Naive thymus-derived CD4-positive, alpha-beta T cell (primary cell): ENCODE measurements at regions of chr6 and their contacts with region 1.

Region 1: DNA sequence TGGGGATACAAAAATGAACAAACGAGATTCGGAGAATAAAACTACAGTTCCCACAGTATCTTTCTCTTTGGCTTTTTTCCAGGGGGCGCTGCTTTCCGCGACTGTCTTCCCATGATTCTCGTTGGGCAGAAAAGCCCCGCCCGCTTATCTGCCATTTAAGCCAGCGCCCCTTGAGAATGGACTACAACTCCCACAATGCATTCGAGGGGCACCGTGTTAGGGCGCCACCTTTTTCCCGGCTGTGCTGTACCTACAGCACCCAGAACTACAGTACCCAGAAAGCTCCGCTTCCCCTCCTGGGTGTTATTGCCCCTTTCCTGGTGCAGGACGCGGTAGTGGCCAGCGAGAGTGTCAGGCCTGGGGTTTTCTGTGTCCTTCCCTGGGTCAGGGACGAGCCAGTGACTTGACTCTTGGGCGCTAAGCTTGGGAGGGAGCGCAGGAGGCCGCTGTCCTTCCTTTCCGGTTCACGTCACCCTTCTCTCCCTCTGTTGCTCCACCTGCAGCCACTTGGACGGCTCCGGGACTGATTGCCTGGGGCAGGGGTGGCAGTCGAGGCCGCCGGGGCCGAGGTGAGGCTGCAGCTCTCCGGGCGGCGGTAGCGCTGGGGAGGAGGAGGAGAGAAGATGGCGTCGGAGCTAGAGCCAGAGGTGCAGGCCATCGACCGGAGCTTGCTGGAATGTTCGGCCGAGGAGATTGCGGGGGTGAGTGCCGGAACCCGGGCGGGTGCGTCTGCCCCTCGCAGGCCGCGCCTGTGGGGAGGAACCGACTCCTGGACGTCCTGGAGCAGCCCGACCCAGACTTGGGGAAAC is at the start of gene UBR2:
- DNase-seq: peak; percentile 67 to 97 (median 93)
- ATAC-seq: peak; percentile 99
- H3K4me3 ChIP-seq: peak within 1 kb of the TSS; percentile 92
- H3K4me3 Mint-ChIP-seq: peak within 1 kb of the TSS; percentile 94 to 100 (median 96)
- H3K27ac ChIP-seq: peak within 1 kb of the TSS; percentile 95
- H3K27ac Mint-ChIP-seq: peak within 1 kb of the TSS; percentile 89 to 98 (median 93)
- H3K4me1 ChIP-seq: peaks cover 7 to 12% of the 10 kb centered on the region in 2 donors
- H3K4me1 Mint-ChIP-seq: peaks cover 17 to 43% (median 29%) of the 10 kb centered on the region in 7 donors
- H3K27me3 ChIP-seq: no peaks in the 10 kb centered on the region
- H3K27me3 Mint-ChIP-seq: peaks cover 0 to 7% (median 0%) of the 10 kb centered on the region in 5 donors
- total RNA-seq, gene UBR2: 35.6 to 45.5 (median 38.9) TPM

Region 2: DNA sequence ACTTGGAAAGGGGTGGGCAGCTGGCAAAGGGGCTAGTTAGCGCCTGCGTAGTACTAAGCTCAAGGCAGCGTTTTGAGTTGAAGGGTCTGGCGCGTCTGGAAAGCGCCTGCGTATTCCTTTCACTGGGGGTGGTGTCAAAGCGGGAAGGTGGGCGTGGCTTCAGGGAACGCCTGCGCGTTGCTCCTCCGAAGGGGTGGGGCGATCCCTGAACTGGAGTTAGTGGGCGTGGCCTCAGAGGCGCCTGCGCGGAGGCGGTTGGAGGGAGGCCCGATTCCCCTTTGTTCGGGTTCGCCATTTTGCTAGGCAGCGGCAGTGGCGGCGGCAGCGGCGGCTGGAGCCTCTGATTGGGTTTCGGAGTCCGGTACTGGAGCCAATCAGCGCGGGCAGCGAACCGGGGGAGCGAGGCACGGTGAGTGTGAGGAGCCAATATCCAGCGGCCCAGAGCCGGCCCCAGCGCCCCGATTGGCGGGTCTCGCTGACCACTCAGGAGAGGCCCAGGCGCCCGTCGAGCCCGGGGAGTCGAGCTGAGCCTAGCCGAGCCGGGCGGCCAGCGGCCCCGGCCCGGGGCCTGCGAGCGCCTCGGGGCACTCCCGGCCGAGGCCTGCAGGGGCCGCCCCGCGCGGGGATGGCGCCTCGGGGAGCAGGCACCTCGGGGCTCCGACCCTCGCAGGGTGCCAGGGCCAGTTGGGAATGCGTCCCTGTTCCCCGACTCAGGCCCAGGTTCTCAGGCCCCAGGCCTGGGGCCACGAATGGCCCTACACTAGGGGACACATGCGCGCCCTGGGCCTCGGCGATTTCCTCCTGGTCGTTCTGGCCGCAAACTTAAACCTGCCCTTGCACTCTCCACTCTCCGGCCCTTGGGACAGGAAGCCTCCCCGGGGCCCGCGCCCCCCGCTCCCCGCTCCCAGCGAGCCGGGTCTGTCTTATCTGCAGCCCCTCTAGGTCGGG is 1491.0 kb before region 1 on chr6 and contains the start of gene NFYA:
- CTCF ChIA-PET with region 1: no interaction called
- POLR2A ChIA-PET with region 1: no interaction called
- intact Hi-C with region 1: loop called in 1 of 2 experiments (anchors 5 kb)
- DNase-seq: peak; percentile 99 to 100 (median 100)
- ATAC-seq: peak; percentile 80
- H3K4me3 ChIP-seq: peak within 1 kb of the TSS; percentile 78
- H3K4me3 Mint-ChIP-seq: peak within 1 kb of the TSS; percentile 90 to 98 (median 96)
- H3K27ac ChIP-seq: peak within 1 kb of the TSS; percentile 95
- H3K27ac Mint-ChIP-seq: peak within 1 kb of the TSS; percentile 95 to 99 (median 97)
- H3K4me1 ChIP-seq: peaks cover 30% of the 10 kb centered on the region in 2 donors
- H3K4me1 Mint-ChIP-seq: peaks cover 39 to 66% (median 59%) of the 10 kb centered on the region in 7 donors
- H3K27me3 ChIP-seq: no peaks in the 10 kb centered on the region
- H3K27me3 Mint-ChIP-seq: peaks cover 0 to 5% (median 0%) of the 10 kb centered on the region in 5 donors
- total RNA-seq, gene NFYA: 31.6 to 63.3 (median 35.9) TPM

Region 3: GRCh38 chr6:41920921-41921711 is 642.8 kb before region 1 on chr6 and contains the starts of genes BYSL and MED20:
- CTCF ChIA-PET with region 1: no interaction called
- POLR2A ChIA-PET with region 1: interaction called, 3 read pairs
- intact Hi-C with region 1: loop called in 1 of 2 experiments (anchors 1 kb)
- DNase-seq: peak; percentile 93 to 99 (median 96)
- ATAC-seq: peak; percentile 96
- H3K4me3 ChIP-seq: peak within 1 kb of the TSS; percentile 76
- H3K4me3 Mint-ChIP-seq: peak within 1 kb of the TSS; percentile 95 to 100 (median 99)
- H3K27ac ChIP-seq: peak within 1 kb of the TSS; percentile 95
- H3K27ac Mint-ChIP-seq: peak within 1 kb of the TSS; percentile 94 to 100 (median 99)
- H3K4me1 ChIP-seq: peaks cover 20 to 24% of the 10 kb centered on the region in 2 donors
- H3K4me1 Mint-ChIP-seq: peaks cover 27 to 58% (median 50%) of the 10 kb centered on the region in 7 donors
- H3K27me3 ChIP-seq: no peaks in the 10 kb centered on the region
- H3K27me3 Mint-ChIP-seq: peaks cover 0 to 3% (median 0%) of the 10 kb centered on the region in 5 donors
- total RNA-seq, gene BYSL: 3.9 to 35.7 (median 8.1) TPM
- total RNA-seq, gene MED20: 4.5 to 21.7 (median 9.4) TPM

Region 4: GRCh38 chr6:42390228-42390934 is 173.5 kb before region 1 on chr6:
- CTCF ChIA-PET with region 1: no interaction called
- POLR2A ChIA-PET with region 1: interaction called, 10 read pairs
- intact Hi-C with region 1: no loop called
- DNase-seq: peak in 8 of 9 donors; percentile 69 to 90 (median 82)
- ATAC-seq: peak; percentile 88
- H3K4me3 ChIP-seq: peak overlapping the region; percentile 50
- H3K4me3 Mint-ChIP-seq: peak overlapping the region; percentile 71 to 87 (median 84)
- H3K27ac ChIP-seq: peak overlapping the region; percentile 85
- H3K27ac Mint-ChIP-seq: peak overlapping the region; percentile 97 to 100 (median 99)
- H3K4me1 ChIP-seq: peaks cover 89% of the 10 kb centered on the region in 2 donors
- H3K4me1 Mint-ChIP-seq: peaks cover 75 to 100% (median 96%) of the 10 kb centered on the region in 7 donors
- H3K27me3 ChIP-seq: no peaks in the 10 kb centered on the region
- H3K27me3 Mint-ChIP-seq: no peaks in the 10 kb centered on the region

Region 5: DNA sequence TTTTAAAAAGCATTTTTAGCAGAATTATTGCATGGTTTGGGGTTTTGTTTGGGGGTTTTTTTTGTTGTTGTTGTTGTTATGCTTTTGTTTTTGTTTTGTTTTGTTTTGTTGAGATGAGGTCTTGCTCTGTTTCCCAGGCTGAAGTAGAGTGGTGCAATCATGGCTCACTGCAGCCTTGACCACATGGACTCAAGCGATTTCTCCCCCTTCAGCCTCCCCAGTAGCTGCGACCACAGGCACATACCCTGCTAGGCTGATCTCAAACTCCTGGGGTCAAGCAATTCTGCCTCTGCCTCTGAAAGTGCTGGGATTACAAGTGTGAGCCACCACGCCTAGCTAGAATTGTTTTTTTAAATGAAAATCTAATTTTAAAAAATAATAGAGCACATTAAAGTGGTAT is 35.7 kb after region 1 on chr6:
- CTCF ChIA-PET with region 1: no interaction called
- POLR2A ChIA-PET with region 1: no interaction called
- intact Hi-C with region 1: no loop called
- DNase-seq: no peak
- ATAC-seq: no peak
- H3K4me3 ChIP-seq: no peak overlapping the region
- H3K4me3 Mint-ChIP-seq: no peak overlapping the region
- H3K27ac ChIP-seq: no peak overlapping the region
- H3K27ac Mint-ChIP-seq: peak overlapping the region in 1 of 9 donors; percentile 59
- H3K4me1 ChIP-seq: no peaks in the 10 kb centered on the region
- H3K4me1 Mint-ChIP-seq: peaks cover 6 to 20% (median 11%) of the 10 kb centered on the region in 7 donors
- H3K27me3 ChIP-seq: no peaks in the 10 kb centered on the region
- H3K27me3 Mint-ChIP-seq: no peaks in the 10 kb centered on the region

Region 6: GRCh38 chr6:42714098-42714761 is 150.3 kb after region 1 on chr6:
- CTCF ChIA-PET with region 1: no interaction called
- POLR2A ChIA-PET with region 1: no interaction called
- intact Hi-C with region 1: no loop called
- DNase-seq: no peak
- ATAC-seq: no peak
- H3K4me3 ChIP-seq: no peak overlapping the region
- H3K4me3 Mint-ChIP-seq: no peak overlapping the region
- H3K27ac ChIP-seq: no peak overlapping the region
- H3K27ac Mint-ChIP-seq: no peak overlapping the region
- H3K4me1 ChIP-seq: no peaks in the 10 kb centered on the region
- H3K4me1 Mint-ChIP-seq: no peaks in the 10 kb centered on the region
- H3K27me3 ChIP-seq: no peaks in the 10 kb centered on the region
- H3K27me3 Mint-ChIP-seq: no peaks in the 10 kb centered on the region

Region 7: GRCh38 chr6:42879372-42880239 is 315.7 kb after region 1 on chr6 and contains the start of gene RPL7L1:
- CTCF ChIA-PET with region 1: no interaction called
- POLR2A ChIA-PET with region 1: interaction called, 9 read pairs
- intact Hi-C with region 1: loop called (anchors 1 kb)
- DNase-seq: peak; percentile 70 to 93 (median 88)
- ATAC-seq: peak; percentile 95
- H3K4me3 ChIP-seq: peak within 1 kb of the TSS; percentile 82
- H3K4me3 Mint-ChIP-seq: peak within 1 kb of the TSS; percentile 93 to 99 (median 96)
- H3K27ac ChIP-seq: peak within 1 kb of the TSS; percentile 89
- H3K27ac Mint-ChIP-seq: peak within 1 kb of the TSS; percentile 98 to 100 (median 99)
- H3K4me1 ChIP-seq: peaks cover 5 to 7% of the 10 kb centered on the region in 2 donors
- H3K4me1 Mint-ChIP-seq: peaks cover 7 to 40% (median 29%) of the 10 kb centered on the region in 7 donors
- H3K27me3 ChIP-seq: no peaks in the 10 kb centered on the region
- H3K27me3 Mint-ChIP-seq: no peaks in the 10 kb centered on the region
- total RNA-seq, gene RPL7L1: 65.6 to 91.7 (median 78.1) TPM

Region 8: GRCh38 chr6:43059168-43060033 is 495.5 kb after region 1 on chr6 and contains the starts of genes KLC4 and MRPL2:
- CTCF ChIA-PET with region 1: no interaction called
- POLR2A ChIA-PET with region 1: interaction called, 5 read pairs
- intact Hi-C with region 1: loop called (anchors 1 kb)
- DNase-seq: peak; percentile 79 to 98 (median 95)
- ATAC-seq: peak; percentile 99
- H3K4me3 ChIP-seq: peak within 1 kb of the TSS; percentile 80
- H3K4me3 Mint-ChIP-seq: peak within 1 kb of the TSS; percentile 88 to 100 (median 96)
- H3K27ac ChIP-seq: peak within 1 kb of the TSS; percentile 88
- H3K27ac Mint-ChIP-seq: peak within 1 kb of the TSS; percentile 95 to 100 (median 99)
- H3K4me1 ChIP-seq: peaks cover 0 to 21% of the 10 kb centered on the region in 2 donors
- H3K4me1 Mint-ChIP-seq: peaks cover 28 to 50% (median 45%) of the 10 kb centered on the region in 7 donors
- H3K27me3 ChIP-seq: no peaks in the 10 kb centered on the region
- H3K27me3 Mint-ChIP-seq: no peaks in the 10 kb centered on the region
- total RNA-seq, gene KLC4: 16.5 to 56.9 (median 42.5) TPM
- total RNA-seq, gene MRPL2: 32.0 to 57.5 (median 47.7) TPM

Region 9: DNA sequence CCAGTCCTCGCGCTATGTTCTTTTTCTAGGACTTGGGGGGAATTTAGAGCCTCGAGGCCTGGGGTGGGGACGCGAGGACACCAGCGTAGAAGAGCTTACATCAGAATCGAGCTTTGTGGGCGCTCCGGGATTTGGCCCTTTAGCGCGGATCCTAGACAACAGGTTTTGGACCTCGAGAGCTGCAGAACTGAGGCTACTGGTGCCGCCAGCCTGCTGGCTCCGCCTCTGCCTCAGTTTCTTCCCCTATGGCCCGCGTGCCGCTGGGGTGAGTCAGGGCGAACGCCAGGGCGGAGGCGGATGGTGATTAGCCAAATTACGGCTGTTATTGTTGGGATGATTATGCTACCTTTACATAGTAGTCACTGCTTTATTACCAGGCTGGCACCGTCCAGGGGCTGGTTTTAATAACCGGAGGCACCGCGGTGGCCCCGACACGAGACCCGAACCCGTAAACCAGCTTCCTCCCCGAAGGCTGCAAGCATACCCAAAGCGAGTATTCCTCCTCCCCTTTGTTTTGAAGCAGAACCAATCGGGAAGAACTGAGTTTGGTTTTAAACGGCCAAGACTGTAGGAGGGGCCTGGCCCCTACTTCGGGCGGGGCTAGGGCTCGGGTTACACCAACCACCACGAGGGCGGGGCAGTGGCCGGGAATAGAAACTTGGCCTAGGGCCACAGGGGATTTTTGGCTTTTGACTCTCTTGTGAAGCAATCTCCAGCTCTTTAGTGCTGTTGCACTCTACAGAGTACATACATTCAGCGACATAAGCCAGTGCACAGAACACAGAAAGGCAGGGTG is 1065.8 kb after region 1 on chr6:
- CTCF ChIA-PET with region 1: no interaction called
- POLR2A ChIA-PET with region 1: no interaction called
- intact Hi-C with region 1: loop called in 1 of 2 experiments (anchors 10 kb)
- DNase-seq: peak; percentile 64 to 90 (median 75)
- ATAC-seq: peak; percentile 79
- H3K4me3 ChIP-seq: peak overlapping the region; percentile 98
- H3K4me3 Mint-ChIP-seq: peak overlapping the region; percentile 97 to 100 (median 99)
- H3K27ac ChIP-seq: peak overlapping the region; percentile 76
- H3K27ac Mint-ChIP-seq: peak overlapping the region; percentile 90 to 99 (median 98)
- H3K4me1 ChIP-seq: peaks cover 9 to 11% of the 10 kb centered on the region in 2 donors
- H3K4me1 Mint-ChIP-seq: peaks cover 30 to 42% (median 38%) of the 10 kb centered on the region in 7 donors
- H3K27me3 ChIP-seq: no peaks in the 10 kb centered on the region
- H3K27me3 Mint-ChIP-seq: no peaks in the 10 kb centered on the region